H1 (cell line): ENCODE measurements at regions of chr6 and their contacts with region 1.

Region 1: GRCh38 chr6:149431905-149432775 is 32.1 kb downstream of the SUMO4 start:
- DNase-seq: peak; percentile 92 to 99
- H3K4me3 ChIP-seq: no peak overlapping the region
- H3K27ac ChIP-seq: no peak overlapping the region
- H3K4me1 ChIP-seq: 0 out of 7 replicates have a peak, but pooled peaks cover 0 to 2% (median 0%) of the 10 kb centered on the region in 4 experiments
- H3K27me3 ChIP-seq: no peaks in the 10 kb centered on the region
- CTCF ChIP-seq: peak; percentile 94 to 98 (median 95)
- EP300 ChIP-seq: no peak
- POLR2A ChIP-seq: no peak
- RAD21 ChIP-seq: peak; percentile 99 to 100

Region 2: GRCh38 chr6:149043476-149044130 is 388.5 kb before region 1 on chr6:
- CTCF ChIA-PET with region 1: interaction called, 14 read pairs
- POLR2A ChIA-PET with region 1: no interaction called
- DNase-seq: peak; percentile 27 to 78
- H3K4me3 ChIP-seq: no peak overlapping the region
- H3K27ac ChIP-seq: no peak overlapping the region
- H3K4me1 ChIP-seq: peaks cover 0 to 12% (median 7%) of the 10 kb centered on the region in 4 experiments; a peak in 6 of 7 replicates
- H3K27me3 ChIP-seq: no peaks in the 10 kb centered on the region
- CTCF ChIP-seq: peak; percentile 65 to 76 (median 69)
- EP300 ChIP-seq: no peak
- POLR2A ChIP-seq: no peak
- RAD21 ChIP-seq: peak; percentile 63 to 75

Region 3: DNA sequence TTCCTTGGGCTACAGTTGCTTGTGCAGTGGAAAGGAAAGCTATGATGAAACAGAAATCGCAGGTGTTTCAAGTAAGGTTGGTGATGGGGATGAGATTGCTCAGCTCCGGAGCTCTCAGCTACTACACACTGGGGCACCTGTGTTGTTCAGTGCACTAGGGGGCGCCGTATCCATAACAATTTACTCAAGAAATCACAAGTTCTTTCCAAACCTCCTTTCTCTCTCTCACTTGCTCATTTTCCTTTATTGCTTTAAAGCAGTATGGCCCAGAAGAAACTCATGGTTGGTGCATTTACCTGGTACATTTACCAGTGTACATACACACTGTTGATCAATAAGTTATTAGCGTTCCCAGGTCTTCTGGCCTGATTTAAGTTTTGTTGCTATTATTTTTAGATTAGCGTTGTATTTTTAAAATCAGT is 349.8 kb before region 1 on chr6:
- CTCF ChIA-PET with region 1: interaction called, 19 read pairs
- POLR2A ChIA-PET with region 1: no interaction called
- DNase-seq: peak in 1 of 2 experiments; percentile 78
- H3K4me3 ChIP-seq: no peak overlapping the region
- H3K27ac ChIP-seq: no peak overlapping the region
- H3K4me1 ChIP-seq: peaks cover 0 to 3% (median 0%) of the 10 kb centered on the region in 4 experiments; a peak in 3 of 7 replicates
- H3K27me3 ChIP-seq: no peaks in the 10 kb centered on the region
- CTCF ChIP-seq: peak; percentile 58 to 83 (median 78)
- EP300 ChIP-seq: no peak
- POLR2A ChIP-seq: no peak
- RAD21 ChIP-seq: peak; percentile 90 to 91

Region 4: GRCh38 chr6:149094156-149094555 is 338.0 kb before region 1 on chr6:
- CTCF ChIA-PET with region 1: interaction called, 10 read pairs
- POLR2A ChIA-PET with region 1: no interaction called
- DNase-seq: peak in 1 of 2 experiments; percentile 7
- H3K4me3 ChIP-seq: no peak overlapping the region
- H3K27ac ChIP-seq: no peak overlapping the region
- H3K4me1 ChIP-seq: peaks cover 3 to 6% (median 4%) of the 10 kb centered on the region in 4 experiments; a peak in 4 of 7 replicates
- H3K27me3 ChIP-seq: no peaks in the 10 kb centered on the region
- CTCF ChIP-seq: no peak
- EP300 ChIP-seq: no peak
- POLR2A ChIP-seq: no peak
- RAD21 ChIP-seq: no peak

Region 5: DNA sequence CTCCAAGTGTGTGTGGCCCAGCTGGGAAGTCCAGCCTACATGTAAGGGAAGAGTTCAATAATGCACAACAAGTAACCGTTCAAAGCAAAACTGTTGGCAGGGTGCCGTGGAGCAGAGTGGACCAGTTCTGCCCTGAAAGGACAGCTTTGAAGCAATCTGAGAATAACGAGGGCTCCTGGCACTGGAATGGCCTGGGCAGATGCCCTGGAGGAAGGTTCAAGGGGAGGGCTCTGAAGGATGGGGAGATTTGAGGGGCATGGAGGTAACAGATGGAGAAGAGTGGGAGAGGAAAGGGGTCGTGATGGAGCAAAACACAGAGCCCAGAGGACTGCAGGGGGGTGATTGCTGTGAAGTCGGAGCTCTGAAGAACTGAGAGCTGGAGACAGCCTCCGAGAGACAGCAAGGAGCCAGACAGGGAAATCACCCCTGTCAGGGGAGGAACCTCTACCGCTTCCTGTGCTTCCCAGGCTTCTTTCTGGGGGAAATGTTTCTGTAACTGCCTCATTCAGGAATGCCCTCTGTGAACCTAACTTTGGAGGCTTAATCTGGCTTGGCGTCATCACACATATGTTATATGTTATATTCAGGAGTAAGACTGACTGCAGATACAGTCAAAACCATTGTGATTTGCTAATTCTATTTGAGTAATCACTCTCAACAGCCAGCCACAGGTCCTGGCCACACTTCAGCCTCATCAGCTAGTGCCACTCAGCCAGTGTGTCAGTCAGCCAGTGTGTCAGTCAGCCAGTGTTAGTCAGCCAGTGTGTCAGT is 11.5 kb after region 1 on chr6:
- CTCF ChIA-PET with region 1: interaction called, 16 read pairs
- POLR2A ChIA-PET with region 1: no interaction called
- DNase-seq: no peak
- H3K4me3 ChIP-seq: no peak overlapping the region
- H3K27ac ChIP-seq: no peak overlapping the region
- H3K4me1 ChIP-seq: no peaks in the 10 kb centered on the region
- H3K27me3 ChIP-seq: no peaks in the 10 kb centered on the region
- CTCF ChIP-seq: no peak
- EP300 ChIP-seq: no peak
- POLR2A ChIP-seq: no peak
- RAD21 ChIP-seq: no peak